ENCODE measurements at regions of chr16 and their contacts with region 1.

Region 1: GRCh38 chr16:3129137-3130131 is 5.4 kb upstream of the ZNF213 start:
- DNase-seq: peak; percentile 89
- ATAC-seq: peak; percentile 69
- H3K4me3 Mint-ChIP-seq: peak overlapping the region; percentile 94
- H3K27ac Mint-ChIP-seq: peak overlapping the region; percentile 90
- H3K4me1 Mint-ChIP-seq: peaks cover 67% of the 10 kb centered on the region
- H3K27me3 Mint-ChIP-seq: no peaks in the 10 kb centered on the region

Region 2: GRCh38 chr16:3065069-3065741 is 64.2 kb before region 1 on chr16 and contains the start of gene IL32:
- CTCF ChIA-PET with region 1: interaction called, 230 read pairs
- POLR2A ChIA-PET with region 1: interaction called, 18 read pairs
- DNase-seq: peak; percentile 78
- ATAC-seq: peak; percentile 52
- H3K4me3 Mint-ChIP-seq: peak within 1 kb of the TSS; percentile 100
- H3K27ac Mint-ChIP-seq: peak within 1 kb of the TSS; percentile 99
- H3K4me1 Mint-ChIP-seq: peaks cover 74% of the 10 kb centered on the region
- H3K27me3 Mint-ChIP-seq: no peaks in the 10 kb centered on the region
- total RNA-seq, gene IL32: 1,836 to 1,884 TPM

Region 3: GRCh38 chr16:3094289-3095027 is 35.0 kb before region 1 on chr16:
- CTCF ChIA-PET with region 1: interaction called, 354 read pairs
- POLR2A ChIA-PET with region 1: interaction called, 8 read pairs
- DNase-seq: peak; percentile 67
- ATAC-seq: peak; percentile 38
- H3K4me3 Mint-ChIP-seq: no peak overlapping the region
- H3K27ac Mint-ChIP-seq: peak overlapping the region; percentile 69
- H3K4me1 Mint-ChIP-seq: peaks cover 65% of the 10 kb centered on the region
- H3K27me3 Mint-ChIP-seq: peaks cover 2% of the 10 kb centered on the region

Region 4: DNA sequence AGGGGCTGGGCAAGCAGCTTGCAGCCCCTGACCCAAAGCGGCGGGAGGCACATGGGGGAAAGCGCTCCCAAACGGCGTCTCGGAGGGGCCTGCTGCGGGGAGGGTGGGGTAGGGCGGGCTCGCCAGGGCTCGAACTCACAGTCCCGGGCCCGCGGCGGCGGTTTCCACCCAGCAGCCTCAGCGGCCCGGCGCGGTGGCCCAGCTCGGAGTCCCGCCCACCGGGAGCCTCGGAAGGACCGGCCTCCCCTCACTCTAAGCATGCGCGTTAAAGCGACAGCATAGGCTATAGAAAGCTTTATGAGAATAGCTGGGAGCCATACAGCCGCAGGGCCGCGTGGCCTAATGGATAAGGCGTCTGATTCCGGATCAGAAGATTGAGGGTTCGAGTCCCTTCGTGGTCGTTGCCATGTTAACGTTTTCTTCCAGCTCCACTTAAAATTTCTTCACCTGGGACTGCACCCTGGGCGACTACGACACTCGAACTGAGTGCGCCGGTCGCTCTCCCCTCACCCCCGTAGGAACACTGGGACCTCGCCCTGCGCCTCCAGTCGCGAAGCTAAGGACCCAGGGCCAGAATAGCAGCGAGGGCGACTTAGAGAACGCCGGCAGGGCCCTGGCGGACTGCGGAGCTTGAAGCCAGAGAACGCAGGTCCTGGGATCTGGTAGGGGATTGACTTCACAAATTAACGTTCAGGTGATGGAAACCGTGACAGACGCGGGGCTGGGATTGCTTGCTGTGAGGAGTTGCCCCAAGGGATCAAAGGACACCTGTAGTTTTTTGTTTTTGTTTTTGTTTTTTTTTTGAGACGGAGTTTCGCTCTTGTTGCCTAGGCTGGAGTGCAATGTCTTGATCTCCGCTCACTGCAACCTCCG is 21.1 kb after region 1 on chr16:
- CTCF ChIA-PET with region 1: interaction called, 86 read pairs
- POLR2A ChIA-PET with region 1: interaction called, 16 read pairs
- DNase-seq: peak; percentile 98
- ATAC-seq: peak; percentile 84
- H3K4me3 Mint-ChIP-seq: peak overlapping the region; percentile 85
- H3K27ac Mint-ChIP-seq: peak overlapping the region; percentile 87
- H3K4me1 Mint-ChIP-seq: peaks cover 38% of the 10 kb centered on the region
- H3K27me3 Mint-ChIP-seq: peaks cover 17% of the 10 kb centered on the region

Region 5: GRCh38 chr16:3165111-3165822 is 35.8 kb after region 1 on chr16:
- CTCF ChIA-PET with region 1: interaction called, 18 read pairs
- POLR2A ChIA-PET with region 1: no interaction called
- DNase-seq: no peak
- ATAC-seq: no peak
- H3K4me3 Mint-ChIP-seq: peak overlapping the region; percentile 18
- H3K27ac Mint-ChIP-seq: peak overlapping the region; percentile 34
- H3K4me1 Mint-ChIP-seq: peaks cover 34% of the 10 kb centered on the region
- H3K27me3 Mint-ChIP-seq: peaks cover 15% of the 10 kb centered on the region

Region 6: DNA sequence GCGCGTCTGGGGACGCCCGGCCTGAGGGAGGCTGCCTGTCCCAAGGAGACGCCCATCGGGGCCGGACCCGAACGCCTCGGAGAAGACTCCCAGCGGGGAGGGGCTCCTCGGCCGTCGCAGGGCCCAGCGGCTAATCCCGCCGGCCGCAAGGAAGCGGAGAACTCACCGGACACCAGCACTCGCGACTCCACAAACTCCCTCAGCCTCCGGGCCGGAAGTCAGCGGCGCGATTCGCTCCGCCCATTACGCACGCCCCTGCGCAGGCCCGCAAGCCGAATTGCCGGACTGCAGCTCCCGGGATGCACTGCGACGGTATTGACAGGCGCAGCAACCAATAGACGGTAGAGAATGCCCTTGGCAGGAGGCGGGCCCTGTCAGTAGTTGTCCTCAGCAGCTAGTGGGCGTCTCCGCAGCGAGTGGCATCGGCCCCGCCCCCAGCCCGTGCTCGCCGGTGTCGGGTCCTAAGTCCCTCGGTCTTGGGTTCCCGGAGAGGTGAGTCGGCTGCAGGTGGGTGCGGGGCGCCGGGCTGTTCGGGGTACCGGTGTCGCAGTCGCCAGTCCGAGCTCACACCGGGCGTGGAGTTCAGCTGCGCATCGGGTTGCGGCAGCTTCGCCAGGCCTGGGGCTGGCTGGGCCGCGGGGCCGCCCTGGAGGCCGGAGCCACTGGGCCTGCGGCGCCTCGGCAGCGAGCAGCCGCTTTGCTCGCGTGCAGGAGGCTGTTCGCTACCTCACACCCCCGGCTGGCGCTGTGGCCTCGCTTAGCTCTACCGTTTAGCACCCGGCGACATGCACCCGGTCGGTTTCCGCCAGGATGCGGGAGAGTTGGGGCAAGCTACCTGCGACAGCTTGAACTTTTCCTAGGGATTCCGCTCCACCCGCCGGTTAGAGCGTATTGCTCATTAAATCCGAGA is 271.6 kb after region 1 on chr16 and contains the starts of genes ZNF174 and ZSCAN32:
- CTCF ChIA-PET with region 1: no interaction called
- POLR2A ChIA-PET with region 1: no interaction called
- DNase-seq: peak; percentile 99
- ATAC-seq: peak; percentile 99
- H3K4me3 Mint-ChIP-seq: peak within 1 kb of the TSS; percentile 88
- H3K27ac Mint-ChIP-seq: peak within 1 kb of the TSS; percentile 89
- H3K4me1 Mint-ChIP-seq: peaks cover 36% of the 10 kb centered on the region
- H3K27me3 Mint-ChIP-seq: no peaks in the 10 kb centered on the region
- total RNA-seq, gene ZNF174: 10.4 to 12.3 TPM
- total RNA-seq, gene ZSCAN32: 15.9 to 19.0 TPM

Region 7: DNA sequence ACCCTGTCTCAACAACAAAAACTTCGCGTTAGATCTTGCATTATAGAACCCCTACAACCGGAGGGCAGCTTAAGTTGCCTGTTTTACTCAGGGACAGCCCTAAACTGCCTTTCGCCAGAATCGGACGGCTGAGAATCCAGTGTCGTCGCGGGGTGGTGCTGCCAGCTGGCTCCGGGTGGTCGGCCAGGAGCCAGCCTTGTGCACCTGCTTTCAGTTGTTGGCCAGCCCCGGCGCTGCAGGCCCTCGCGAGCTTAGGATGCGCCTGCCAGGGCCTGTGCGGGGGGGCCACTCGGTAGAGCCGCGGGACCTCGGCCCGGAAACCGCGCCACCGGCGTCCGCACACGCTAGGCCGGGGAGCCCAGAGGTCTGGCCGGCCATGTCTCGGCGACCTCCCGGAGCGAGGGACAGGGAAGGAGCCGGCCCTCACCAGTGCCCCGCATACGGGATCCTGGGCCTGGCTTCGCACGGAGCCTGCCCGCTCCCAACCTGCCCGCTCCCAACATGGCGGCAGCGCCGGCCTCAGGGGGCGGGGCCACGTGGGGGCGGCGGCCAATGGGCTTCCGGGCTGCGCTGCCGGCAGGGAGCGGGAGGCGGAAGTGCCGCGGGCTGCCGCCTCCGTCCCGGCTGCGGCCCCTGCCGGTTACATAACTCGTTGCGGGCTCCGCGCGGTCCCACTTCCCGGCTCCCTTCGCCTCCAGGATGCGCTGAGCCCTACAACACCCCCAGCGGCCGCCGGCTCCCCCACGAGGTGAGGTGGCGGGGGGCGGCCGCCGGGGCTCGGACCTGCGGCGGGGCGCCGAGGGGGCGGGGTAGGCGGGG is 328.2 kb after region 1 on chr16:
- CTCF ChIA-PET with region 1: interaction called, 12 read pairs
- POLR2A ChIA-PET with region 1: no interaction called
- DNase-seq: peak; percentile 89
- ATAC-seq: peak; percentile 89
- H3K4me3 Mint-ChIP-seq: peak overlapping the region; percentile 80
- H3K27ac Mint-ChIP-seq: peak overlapping the region; percentile 87
- H3K4me1 Mint-ChIP-seq: peaks cover 48% of the 10 kb centered on the region
- H3K27me3 Mint-ChIP-seq: no peaks in the 10 kb centered on the region

Region 8: DNA sequence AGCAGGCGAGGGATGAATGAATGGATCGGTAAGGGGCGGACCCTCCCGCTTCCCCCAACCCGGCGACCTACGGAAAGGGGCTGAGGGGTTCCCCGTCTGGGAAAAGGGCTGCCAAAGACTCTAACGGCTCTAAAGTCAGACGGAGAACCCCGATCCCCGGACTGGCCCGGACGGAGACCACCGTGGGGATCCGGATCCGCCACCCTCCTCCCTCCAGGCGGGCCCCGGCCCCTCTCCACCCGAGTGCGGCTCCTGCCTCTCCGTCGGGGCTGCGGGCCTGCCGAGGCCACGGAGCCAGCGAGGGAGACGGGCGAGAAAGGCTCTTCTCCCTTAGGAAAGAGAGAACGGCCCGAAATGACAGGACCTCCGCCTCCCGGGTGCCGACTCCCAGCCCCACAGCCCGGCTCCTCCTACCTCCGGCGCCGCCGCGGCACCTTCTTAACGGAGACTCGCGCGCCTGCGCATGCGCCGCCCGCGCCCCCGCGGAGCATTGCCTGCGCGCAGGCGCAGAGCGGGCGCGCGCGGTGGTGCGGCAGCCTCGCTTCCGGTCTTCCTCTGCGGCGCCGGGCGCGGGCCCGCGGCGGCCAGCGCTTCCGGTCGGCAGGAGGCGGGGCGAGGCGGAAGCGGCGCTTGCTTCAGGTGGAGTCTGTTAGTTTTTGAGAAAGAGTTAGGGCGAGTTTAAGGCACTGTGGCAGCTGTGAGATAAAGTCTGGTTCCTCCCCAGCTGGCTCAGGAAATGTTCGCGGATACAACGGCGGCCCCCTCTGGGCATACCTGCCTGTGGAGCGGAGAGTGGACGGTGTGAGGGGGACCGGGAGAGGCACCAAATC is 481.9 kb after region 1 on chr16 and contains the start of gene SLX4:
- CTCF ChIA-PET with region 1: no interaction called
- POLR2A ChIA-PET with region 1: no interaction called
- DNase-seq: peak; percentile 92
- ATAC-seq: peak; percentile 91
- H3K4me3 Mint-ChIP-seq: peak within 1 kb of the TSS; percentile 97
- H3K27ac Mint-ChIP-seq: peak within 1 kb of the TSS; percentile 98
- H3K4me1 Mint-ChIP-seq: peaks cover 61% of the 10 kb centered on the region
- H3K27me3 Mint-ChIP-seq: no peaks in the 10 kb centered on the region
- total RNA-seq, gene SLX4: 16.3 to 16.5 TPM